ENCODE measurements at regions of chr11 and their contacts with region 1.

Region 1: GRCh38 chr11:123116486-123116885 is 54.5 kb upstream of the HSPA8 start:
- DNase-seq: no peak
- H3K4me3 ChIP-seq: no peak overlapping the region
- H3K27ac ChIP-seq: no peak overlapping the region
- H3K4me1 ChIP-seq: peaks cover 5% of the 10 kb centered on the region
- H3K27me3 ChIP-seq: no peaks in the 10 kb centered on the region
- CTCF ChIP-seq: no peak
- POLR2A ChIP-seq: no peak

Region 2: GRCh38 chr11:123246749-123247495 is 130.4 kb after region 1 on chr11:
- intact Hi-C with region 1: loop called (anchors 5 kb)
- DNase-seq: no peak
- H3K4me3 ChIP-seq: no peak overlapping the region
- H3K27ac ChIP-seq: no peak overlapping the region
- H3K4me1 ChIP-seq: no peaks in the 10 kb centered on the region
- H3K27me3 ChIP-seq: no peaks in the 10 kb centered on the region
- CTCF ChIP-seq: peak; percentile 81 to 92 (median 83)
- POLR2A ChIP-seq: no peak

Measured in vagina (tissue), 2 donors.